HCT116 (cell line): ENCODE measurements at regions of chr4 and their contacts with region 1.

Region 1: GRCh38 chr4:20698382-20698781 is 1.9 kb upstream of the PACRGL start:
- DNase-seq: no peak
- ATAC-seq: no peak
- H3K4me3 ChIP-seq: no peak overlapping the region
- H3K27ac ChIP-seq: no peak overlapping the region
- H3K4me1 ChIP-seq: peaks cover 8 to 17% of the 10 kb centered on the region in 2 experiments; a peak in 3 of 4 replicates
- H3K27me3 ChIP-seq: no peaks in the 10 kb centered on the region
- CTCF ChIP-seq: no peak
- POLR2A ChIP-seq: no peak
- RAD21 ChIP-seq: no peak

Region 2: DNA sequence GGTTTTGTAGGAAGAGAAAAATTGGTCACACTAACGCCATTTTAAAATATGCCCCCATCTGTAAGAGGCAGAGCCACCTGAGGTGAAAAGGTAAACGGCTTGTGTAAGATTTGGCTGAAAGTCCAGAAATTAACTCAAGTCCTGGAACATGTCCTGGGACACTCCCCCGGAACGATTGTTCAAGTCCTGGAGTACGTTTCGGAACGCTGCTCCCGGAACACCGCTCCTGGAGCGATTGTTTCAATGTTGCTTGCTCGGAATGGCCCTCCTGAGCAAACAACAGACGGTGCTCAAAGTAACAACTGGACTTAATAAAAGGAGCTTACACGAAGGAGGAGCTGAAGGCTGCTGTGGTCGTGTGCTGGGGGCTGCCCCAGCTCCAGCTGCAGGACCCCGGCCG is 1243.2 kb before region 1 on chr4:
- CTCF ChIA-PET with region 1: no interaction called
- POLR2A ChIA-PET with region 1: no interaction called
- RAD21 ChIA-PET with region 1: no interaction called
- intact Hi-C with region 1: loop called (anchors 10 kb)
- DNase-seq: peak; percentile 45
- ATAC-seq: peak; percentile 60
- H3K4me3 ChIP-seq: peak overlapping the region; percentile 69 to 83
- H3K27ac ChIP-seq: peak overlapping the region; percentile 72
- H3K4me1 ChIP-seq: 0 out of 4 replicates have a peak, but pooled peaks cover 0 to 6% of the 10 kb centered on the region in 2 experiments
- H3K27me3 ChIP-seq: no peaks in the 10 kb centered on the region
- CTCF ChIP-seq: no peak
- POLR2A ChIP-seq: no peak
- RAD21 ChIP-seq: no peak